ENCODE measurements at regions of chr2 and their contacts with region 1.

Region 1: GRCh38 chr2:195451160-195451559 is 205.9 kb upstream of the SLC39A10 start:
- DNase-seq: peak; percentile 43
- ATAC-seq: no peak
- H3K4me3 ChIP-seq: no peak overlapping the region
- H3K27ac ChIP-seq: no peak overlapping the region
- H3K4me1 ChIP-seq: peaks cover 3% of the 10 kb centered on the region
- H3K27me3 ChIP-seq: no peaks in the 10 kb centered on the region
- CTCF ChIP-seq: no peak
- POLR2A ChIP-seq: no peak
- RAD21 ChIP-seq: no peak

Region 2: DNA sequence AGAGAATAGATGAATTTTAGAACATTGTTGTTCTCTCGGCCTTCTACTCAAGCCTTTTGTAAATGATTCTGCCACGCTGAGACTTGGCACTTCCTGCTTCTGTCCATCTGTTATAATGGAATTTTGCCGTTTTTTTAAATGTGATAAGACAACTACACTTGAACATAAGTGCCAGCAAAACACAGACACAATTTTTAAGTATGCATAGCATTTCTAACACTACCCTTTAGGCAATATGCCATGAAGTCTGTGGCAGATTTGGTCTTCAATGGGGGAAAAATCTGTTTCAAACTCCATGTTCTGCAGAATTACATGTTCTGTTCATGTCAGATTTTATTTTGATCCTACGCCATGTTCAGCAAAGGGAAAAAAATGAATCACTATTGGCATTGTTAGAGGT is 964.8 kb before region 1 on chr2:
- CTCF ChIA-PET with region 1: no interaction called
- POLR2A ChIA-PET with region 1: no interaction called
- dilution Hi-C with region 1: no loop called
- in situ Hi-C with region 1: no loop called
- intact Hi-C with region 1: no loop called
- DNase-seq: no peak
- ATAC-seq: no peak
- H3K4me3 ChIP-seq: no peak overlapping the region
- H3K27ac ChIP-seq: no peak overlapping the region
- H3K4me1 ChIP-seq: no peaks in the 10 kb centered on the region
- H3K27me3 ChIP-seq: no peaks in the 10 kb centered on the region
- CTCF ChIP-seq: no peak
- POLR2A ChIP-seq: no peak
- RAD21 ChIP-seq: no peak

Region 3: DNA sequence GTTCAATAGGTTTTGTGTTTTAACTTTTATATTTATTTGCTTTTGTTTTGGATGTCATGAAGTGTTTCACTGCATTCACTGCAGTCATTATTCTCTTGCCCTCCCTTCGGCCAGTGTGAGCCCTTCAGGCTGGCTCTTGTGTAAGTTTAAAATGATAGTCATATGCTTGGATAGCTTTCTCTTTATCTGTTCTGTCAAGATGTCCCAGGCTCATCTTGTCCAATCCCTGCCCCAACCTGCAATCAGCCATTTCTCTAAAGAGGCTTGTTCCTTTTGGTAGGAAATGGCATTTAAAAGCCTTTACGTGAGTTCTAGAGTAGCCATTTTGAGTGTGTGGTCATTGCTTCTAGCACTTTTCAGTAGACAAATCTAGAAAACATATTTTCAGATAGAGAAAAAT is 32.1 kb before region 1 on chr2:
- CTCF ChIA-PET with region 1: no interaction called
- POLR2A ChIA-PET with region 1: interaction called, 10 read pairs
- dilution Hi-C with region 1: no loop called
- in situ Hi-C with region 1: no loop called
- intact Hi-C with region 1: no loop called
- DNase-seq: no peak
- ATAC-seq: no peak
- H3K4me3 ChIP-seq: no peak overlapping the region
- H3K27ac ChIP-seq: no peak overlapping the region
- H3K4me1 ChIP-seq: no peaks in the 10 kb centered on the region
- H3K27me3 ChIP-seq: no peaks in the 10 kb centered on the region
- CTCF ChIP-seq: no peak
- POLR2A ChIP-seq: no peak
- RAD21 ChIP-seq: no peak

Region 4: GRCh38 chr2:195498176-195498575 is 47.0 kb after region 1 on chr2:
- CTCF ChIA-PET with region 1: interaction called, 10 read pairs
- POLR2A ChIA-PET with region 1: no interaction called
- dilution Hi-C with region 1: no loop called
- in situ Hi-C with region 1: no loop called
- intact Hi-C with region 1: no loop called
- DNase-seq: peak; percentile 30
- ATAC-seq: no peak
- H3K4me3 ChIP-seq: no peak overlapping the region
- H3K27ac ChIP-seq: no peak overlapping the region
- H3K4me1 ChIP-seq: 0 out of 2 replicates have a peak, but pooled peaks cover 2% of the 10 kb centered on the region
- H3K27me3 ChIP-seq: no peaks in the 10 kb centered on the region
- CTCF ChIP-seq: 0 out of 2 replicates have a peak, but pooled peaks have one; percentile 29
- POLR2A ChIP-seq: no peak
- RAD21 ChIP-seq: peak; percentile 32; the same call in 1 of the 2 replicates